ENCODE measurements at regions of chr5 and their contacts with region 1.

Region 1: DNA sequence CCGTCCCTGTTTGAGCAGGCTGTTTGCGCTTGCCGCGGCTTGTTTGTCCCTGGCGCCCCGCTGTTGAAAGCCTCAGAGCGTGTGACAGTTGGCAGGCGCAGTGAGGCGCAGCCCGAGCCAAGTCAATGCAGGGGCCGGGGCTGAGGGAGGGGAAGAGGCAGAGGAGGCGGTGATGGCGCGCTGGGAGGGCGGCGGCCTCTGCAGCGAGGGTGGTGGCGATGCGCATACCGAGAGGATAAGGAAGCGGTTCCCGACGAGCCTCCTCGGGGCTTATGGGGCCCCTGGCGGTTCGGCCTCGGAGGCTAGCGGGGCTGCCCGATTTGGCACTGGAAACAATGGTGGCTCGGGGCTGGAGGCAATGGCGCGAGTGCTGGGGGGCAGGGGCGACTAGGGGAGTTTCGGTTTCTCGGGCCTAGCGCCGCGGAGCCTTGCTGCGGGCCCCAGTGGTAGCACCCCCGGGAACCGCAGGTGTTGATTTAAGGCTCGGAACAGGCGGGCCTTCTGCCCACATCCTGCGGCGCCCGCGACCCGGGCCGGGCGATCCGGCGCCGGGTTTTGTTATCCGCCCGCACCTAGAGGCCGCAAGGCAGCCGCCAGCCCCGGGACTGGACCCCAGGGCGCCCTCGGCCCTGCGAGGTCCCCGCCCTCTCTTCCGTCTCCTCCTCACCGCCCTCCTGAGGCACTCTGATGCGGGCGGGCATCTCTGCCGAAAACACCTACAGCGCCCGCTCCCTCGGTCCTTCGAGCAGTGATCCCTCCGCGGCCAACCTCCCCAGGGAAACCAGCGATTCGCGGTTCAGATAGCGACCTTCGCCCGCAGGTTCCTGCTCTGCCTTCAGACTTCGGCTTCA is 947 bp upstream of the LNPEP start:
- DNase-seq: peak; percentile 92 to 98 (median 97)
- ATAC-seq: peak; percentile 81
- H3K4me3 ChIP-seq: peak overlapping the region; percentile 93
- H3K4me3 Mint-ChIP-seq: peak overlapping the region; percentile 84 to 100 (median 94)
- H3K27ac ChIP-seq: peak overlapping the region; percentile 86
- H3K27ac Mint-ChIP-seq: peak overlapping the region; percentile 95 to 99 (median 97)
- H3K4me1 ChIP-seq: peaks cover 34 to 46% of the 10 kb centered on the region in 2 donors
- H3K4me1 Mint-ChIP-seq: peaks cover 53 to 70% (median 64%) of the 10 kb centered on the region in 7 donors
- H3K27me3 ChIP-seq: no peaks in the 10 kb centered on the region
- H3K27me3 Mint-ChIP-seq: no peaks in the 10 kb centered on the region

Region 2: DNA sequence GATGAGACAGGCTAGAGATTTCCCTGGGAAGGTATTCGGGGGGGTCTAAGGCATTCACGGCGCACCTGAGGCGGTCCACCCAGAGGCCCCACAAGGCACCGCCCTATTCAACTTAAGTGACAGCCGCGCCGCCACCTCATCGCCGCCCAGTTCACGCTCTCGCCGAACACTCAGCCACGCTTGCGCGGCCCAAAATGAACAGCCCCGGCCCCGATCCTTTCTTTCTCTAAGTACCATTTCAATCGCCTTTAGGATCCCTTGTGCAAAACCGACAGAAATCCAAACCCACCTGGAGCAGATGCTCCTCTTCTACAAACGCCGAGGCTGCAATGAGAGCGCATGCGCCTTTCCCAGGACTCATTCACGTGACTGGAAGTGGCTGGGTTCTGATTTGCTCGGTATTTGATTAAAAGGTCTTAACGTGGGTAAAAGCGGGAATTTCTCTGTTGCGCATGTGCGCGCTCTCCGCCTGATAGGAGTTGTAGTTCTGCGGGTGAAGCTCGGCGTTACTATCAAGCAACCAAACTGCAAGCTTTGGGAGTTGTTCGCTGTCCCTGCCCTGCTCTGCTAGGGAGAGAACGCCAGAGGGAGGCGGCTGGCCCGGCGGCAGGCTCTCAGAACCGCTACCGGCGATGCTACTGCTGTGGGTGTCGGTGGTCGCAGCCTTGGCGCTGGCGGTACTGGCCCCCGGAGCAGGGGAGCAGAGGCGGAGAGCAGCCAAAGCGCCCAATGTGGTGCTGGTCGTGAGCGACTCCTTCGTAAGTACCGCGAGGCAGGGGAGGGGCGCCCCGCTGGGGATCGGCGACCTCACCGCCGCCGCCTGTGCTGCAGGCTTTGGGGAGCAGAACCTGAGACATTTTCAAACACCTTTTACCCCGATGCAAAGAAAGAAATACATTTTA is 1380.0 kb before region 1 on chr5 and contains the starts of genes ARSK and SKIC3:
- CTCF ChIA-PET with region 1: no interaction called
- POLR2A ChIA-PET with region 1: no interaction called
- intact Hi-C with region 1: loop called in 1 of 2 experiments (anchors 1 kb)
- DNase-seq: peak; percentile 76 to 98 (median 97)
- ATAC-seq: peak; percentile 93
- H3K4me3 ChIP-seq: peak within 1 kb of the TSS; percentile 71
- H3K4me3 Mint-ChIP-seq: peak within 1 kb of the TSS; percentile 90 to 100 (median 96)
- H3K27ac ChIP-seq: peak within 1 kb of the TSS; percentile 83
- H3K27ac Mint-ChIP-seq: peak within 1 kb of the TSS; percentile 92 to 98 (median 94)
- H3K4me1 ChIP-seq: peaks cover 20 to 27% of the 10 kb centered on the region in 2 donors
- H3K4me1 Mint-ChIP-seq: peaks cover 26 to 66% (median 47%) of the 10 kb centered on the region in 7 donors
- H3K27me3 ChIP-seq: no peaks in the 10 kb centered on the region
- H3K27me3 Mint-ChIP-seq: peaks cover 0 to 2% (median 0%) of the 10 kb centered on the region in 5 donors
- total RNA-seq, gene ARSK: 2.5 to 8.5 (median 4.5) TPM
- total RNA-seq, gene SKIC3: 74.6 to 103 (median 81.0) TPM

Region 3: DNA sequence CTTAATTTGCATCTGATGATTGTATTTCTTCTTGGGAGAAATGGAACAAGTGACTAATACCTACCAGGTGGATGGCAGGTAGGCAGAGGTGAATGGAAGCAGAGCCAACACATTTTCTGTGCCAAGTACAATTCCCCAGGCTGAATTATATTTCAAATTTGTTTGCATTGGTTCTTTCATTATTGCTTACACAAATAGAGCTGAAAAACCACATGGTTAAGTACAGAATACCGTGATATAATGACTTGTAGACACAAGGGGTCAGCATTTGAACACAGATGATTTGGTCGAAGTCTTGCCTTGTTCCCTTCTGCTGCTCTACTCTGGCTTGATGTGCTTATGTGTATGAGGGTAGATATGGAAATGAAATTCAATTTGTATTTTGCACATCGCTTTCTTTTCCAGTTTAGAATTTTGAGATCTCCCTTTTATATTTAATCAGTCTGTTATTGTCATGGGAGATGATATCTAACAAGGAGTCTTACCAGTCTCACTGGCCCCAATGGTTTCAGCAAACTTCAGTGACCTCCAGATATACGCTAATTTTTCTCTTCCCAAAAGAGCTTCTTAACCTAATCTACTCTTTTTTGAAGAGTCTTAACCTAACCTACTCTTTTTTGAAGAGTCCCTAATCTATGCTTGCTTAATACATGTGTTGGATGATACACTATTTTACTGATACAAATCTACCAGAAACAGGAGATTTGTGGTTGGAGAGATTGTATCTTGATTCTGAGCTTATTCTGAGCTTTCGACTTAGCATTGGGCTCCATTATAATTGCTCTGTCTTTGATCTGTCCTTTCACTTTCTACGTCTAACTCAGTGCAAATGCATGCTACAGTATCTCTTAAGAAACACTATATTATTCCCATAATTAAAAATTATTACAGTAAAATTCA is 590.0 kb before region 1 on chr5:
- CTCF ChIA-PET with region 1: no interaction called
- POLR2A ChIA-PET with region 1: no interaction called
- intact Hi-C with region 1: loop called in 1 of 2 experiments (anchors 2 kb)
- DNase-seq: peak in 7 of 9 donors; percentile 33 to 70 (median 59)
- ATAC-seq: peak; percentile 91
- H3K4me3 ChIP-seq: no peak overlapping the region
- H3K4me3 Mint-ChIP-seq: peak overlapping the region; percentile 1 to 72 (median 48)
- H3K27ac ChIP-seq: no peak overlapping the region
- H3K27ac Mint-ChIP-seq: peak overlapping the region in 6 of 9 donors; percentile 3 to 53 (median 10)
- H3K4me1 ChIP-seq: peaks cover 6 to 7% of the 10 kb centered on the region in 2 donors
- H3K4me1 Mint-ChIP-seq: peaks cover 5 to 21% (median 18%) of the 10 kb centered on the region in 7 donors
- H3K27me3 ChIP-seq: no peaks in the 10 kb centered on the region
- H3K27me3 Mint-ChIP-seq: peaks cover 0 to 38% (median 8%) of the 10 kb centered on the region in 5 donors

Region 4: DNA sequence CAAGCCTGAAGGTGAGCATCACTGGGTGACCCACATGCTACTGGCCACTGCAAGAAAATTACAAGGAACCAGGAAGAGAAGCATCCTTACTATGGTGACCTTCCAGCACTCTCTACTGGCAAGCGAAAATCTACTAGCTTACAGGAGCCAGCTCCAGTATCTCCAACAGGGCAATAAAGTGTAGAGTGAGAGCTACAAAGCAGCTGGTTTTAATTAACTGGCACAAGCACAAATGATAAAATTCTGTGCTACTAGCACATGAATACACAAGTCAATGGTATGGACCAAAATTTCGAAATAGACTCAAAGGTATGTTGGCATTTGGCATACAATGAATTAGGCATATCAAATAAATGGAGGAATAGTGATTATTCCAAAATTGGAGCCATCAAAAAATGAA is 386.0 kb before region 1 on chr5:
- CTCF ChIA-PET with region 1: no interaction called
- POLR2A ChIA-PET with region 1: no interaction called
- intact Hi-C with region 1: no loop called
- DNase-seq: no peak
- ATAC-seq: no peak
- H3K4me3 ChIP-seq: no peak overlapping the region
- H3K4me3 Mint-ChIP-seq: no peak overlapping the region
- H3K27ac ChIP-seq: no peak overlapping the region
- H3K27ac Mint-ChIP-seq: no peak overlapping the region
- H3K4me1 ChIP-seq: no peaks in the 10 kb centered on the region
- H3K4me1 Mint-ChIP-seq: peaks cover 0 to 2% (median 0%) of the 10 kb centered on the region in 7 donors
- H3K27me3 ChIP-seq: no peaks in the 10 kb centered on the region
- H3K27me3 Mint-ChIP-seq: peaks cover 0 to 29% (median 6%) of the 10 kb centered on the region in 5 donors

Region 5: GRCh38 chr5:96648023-96648422 is 286.9 kb before region 1 on chr5:
- CTCF ChIA-PET with region 1: no interaction called
- POLR2A ChIA-PET with region 1: no interaction called
- intact Hi-C with region 1: no loop called
- DNase-seq: no peak
- ATAC-seq: no peak
- H3K4me3 ChIP-seq: no peak overlapping the region
- H3K4me3 Mint-ChIP-seq: no peak overlapping the region
- H3K27ac ChIP-seq: no peak overlapping the region
- H3K27ac Mint-ChIP-seq: peak overlapping the region in 1 of 9 donors; percentile 16
- H3K4me1 ChIP-seq: no peaks in the 10 kb centered on the region
- H3K4me1 Mint-ChIP-seq: peaks cover 0 to 3% (median 0%) of the 10 kb centered on the region in 7 donors
- H3K27me3 ChIP-seq: no peaks in the 10 kb centered on the region
- H3K27me3 Mint-ChIP-seq: peaks cover 0 to 47% (median 6%) of the 10 kb centered on the region in 5 donors

Region 6: GRCh38 chr5:96763026-96763425 is 171.9 kb before region 1 on chr5:
- CTCF ChIA-PET with region 1: no interaction called
- POLR2A ChIA-PET with region 1: no interaction called
- intact Hi-C with region 1: no loop called
- DNase-seq: no peak
- ATAC-seq: no peak
- H3K4me3 ChIP-seq: no peak overlapping the region
- H3K4me3 Mint-ChIP-seq: no peak overlapping the region
- H3K27ac ChIP-seq: no peak overlapping the region
- H3K27ac Mint-ChIP-seq: peak overlapping the region in 4 of 9 donors; percentile 17 to 32 (median 26)
- H3K4me1 ChIP-seq: no peaks in the 10 kb centered on the region
- H3K4me1 Mint-ChIP-seq: peaks cover 0 to 18% (median 9%) of the 10 kb centered on the region in 7 donors
- H3K27me3 ChIP-seq: no peaks in the 10 kb centered on the region
- H3K27me3 Mint-ChIP-seq: no peaks in the 10 kb centered on the region

Region 7: GRCh38 chr5:96816411-96816939 is 118.5 kb before region 1 on chr5:
- CTCF ChIA-PET with region 1: no interaction called
- POLR2A ChIA-PET with region 1: interaction called, 6 read pairs
- intact Hi-C with region 1: loop called in 1 of 2 experiments (anchors 2 kb)
- DNase-seq: peak in 8 of 9 donors; percentile 37 to 85 (median 76)
- ATAC-seq: peak; percentile 91
- H3K4me3 ChIP-seq: peak overlapping the region; percentile 64
- H3K4me3 Mint-ChIP-seq: peak overlapping the region; percentile 65 to 93 (median 82)
- H3K27ac ChIP-seq: peak overlapping the region; percentile 70
- H3K27ac Mint-ChIP-seq: peak overlapping the region; percentile 74 to 100 (median 94)
- H3K4me1 ChIP-seq: peaks cover 29 to 59% of the 10 kb centered on the region in 2 donors
- H3K4me1 Mint-ChIP-seq: peaks cover 51 to 95% (median 89%) of the 10 kb centered on the region in 7 donors
- H3K27me3 ChIP-seq: no peaks in the 10 kb centered on the region
- H3K27me3 Mint-ChIP-seq: no peaks in the 10 kb centered on the region

Region 8: DNA sequence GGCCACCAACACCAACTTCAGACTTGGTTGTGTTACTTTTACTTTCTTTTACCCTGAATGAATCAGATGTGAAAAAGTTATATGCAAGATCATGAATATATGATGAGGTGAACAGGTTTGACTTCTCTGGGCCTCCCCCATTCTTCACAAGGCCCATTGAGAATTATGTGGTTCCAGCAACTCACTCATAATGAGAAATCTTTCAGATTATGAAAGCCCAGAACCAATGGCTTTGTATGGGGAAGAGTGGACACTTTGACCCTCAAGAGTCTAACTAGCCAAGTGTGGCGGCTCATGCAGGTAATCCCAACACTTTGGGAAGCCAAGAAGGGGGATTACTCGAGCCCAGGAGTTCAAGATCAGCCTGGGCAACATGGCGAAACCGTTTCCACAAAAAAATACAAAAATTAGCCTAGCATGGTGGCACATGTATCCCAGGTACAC is 15.2 kb before region 1 on chr5:
- CTCF ChIA-PET with region 1: interaction called, 5 read pairs
- POLR2A ChIA-PET with region 1: interaction called, 35 read pairs
- intact Hi-C with region 1: loop called (anchors 1 kb)
- DNase-seq: no peak
- ATAC-seq: no peak
- H3K4me3 ChIP-seq: no peak overlapping the region
- H3K4me3 Mint-ChIP-seq: no peak overlapping the region
- H3K27ac ChIP-seq: no peak overlapping the region
- H3K27ac Mint-ChIP-seq: peak overlapping the region in 5 of 9 donors; percentile 54 to 87 (median 77)
- H3K4me1 ChIP-seq: peaks cover 0 to 16% of the 10 kb centered on the region in 2 donors
- H3K4me1 Mint-ChIP-seq: peaks cover 14 to 56% (median 49%) of the 10 kb centered on the region in 7 donors
- H3K27me3 ChIP-seq: no peaks in the 10 kb centered on the region
- H3K27me3 Mint-ChIP-seq: no peaks in the 10 kb centered on the region

Region 9: DNA sequence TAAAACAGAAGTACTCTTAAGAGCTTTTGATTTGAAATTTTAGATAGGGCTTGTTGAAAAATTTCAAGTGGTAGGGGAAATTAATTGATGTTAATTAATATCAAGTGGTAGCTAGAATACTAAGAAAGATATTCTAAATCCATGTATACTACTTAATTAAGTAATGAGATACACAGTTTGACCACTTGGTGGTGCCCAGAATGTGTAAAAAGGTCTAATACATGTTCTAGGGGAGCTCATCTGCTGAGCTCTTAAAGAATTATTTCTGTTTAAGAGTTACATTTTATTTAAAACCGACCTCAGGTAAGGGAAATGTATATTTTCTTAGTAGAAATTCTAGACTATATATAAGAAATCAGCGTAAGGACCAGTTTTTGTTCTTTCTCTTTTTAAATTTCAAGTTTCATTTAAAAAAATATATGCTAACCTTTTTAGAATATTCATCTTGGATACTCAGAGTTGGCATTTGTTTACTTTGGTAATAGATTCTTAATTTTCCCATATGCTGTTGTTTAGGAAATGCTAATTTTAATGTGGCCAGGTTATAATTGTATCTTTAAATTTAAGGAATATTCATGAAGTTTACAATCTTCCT is 62.4 kb after region 1 on chr5:
- CTCF ChIA-PET with region 1: no interaction called
- POLR2A ChIA-PET with region 1: interaction called, 4 read pairs
- intact Hi-C with region 1: loop called (anchors 2 kb)
- DNase-seq: peak in 5 of 9 donors; percentile 13 to 49 (median 21)
- ATAC-seq: peak; percentile 81
- H3K4me3 ChIP-seq: no peak overlapping the region
- H3K4me3 Mint-ChIP-seq: no peak overlapping the region
- H3K27ac ChIP-seq: no peak overlapping the region
- H3K27ac Mint-ChIP-seq: peak overlapping the region in 5 of 9 donors; percentile 13 to 75 (median 53)
- H3K4me1 ChIP-seq: no peaks in the 10 kb centered on the region
- H3K4me1 Mint-ChIP-seq: peaks cover 12 to 49% (median 33%) of the 10 kb centered on the region in 7 donors
- H3K27me3 ChIP-seq: no peaks in the 10 kb centered on the region
- H3K27me3 Mint-ChIP-seq: no peaks in the 10 kb centered on the region

Region 10: DNA sequence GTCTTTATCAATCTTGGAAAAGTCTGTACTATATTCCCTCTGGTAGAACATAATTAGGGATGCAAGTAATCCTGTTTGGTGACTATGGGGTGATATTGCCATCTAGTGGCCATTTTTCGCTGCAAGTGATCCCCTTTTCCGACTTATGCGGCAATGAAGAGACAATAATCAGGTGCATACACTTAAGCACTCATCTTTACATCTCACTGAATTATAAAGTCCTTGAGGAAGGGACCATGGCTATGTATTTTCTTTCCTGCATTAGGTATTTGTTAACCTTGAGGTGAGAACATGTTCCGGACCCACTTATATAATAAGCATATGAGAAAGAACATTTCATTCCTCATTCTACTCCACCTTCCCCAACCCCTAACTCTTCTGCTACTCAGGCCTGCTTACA is 227.1 kb after region 1 on chr5:
- CTCF ChIA-PET with region 1: interaction called, 3 read pairs
- POLR2A ChIA-PET with region 1: no interaction called
- intact Hi-C with region 1: loop called (anchors 1 to 2 kb)
- DNase-seq: peak in 7 of 9 donors; percentile 23 to 64 (median 45)
- ATAC-seq: peak; percentile 62
- H3K4me3 ChIP-seq: no peak overlapping the region
- H3K4me3 Mint-ChIP-seq: no peak overlapping the region
- H3K27ac ChIP-seq: no peak overlapping the region
- H3K27ac Mint-ChIP-seq: no peak overlapping the region
- H3K4me1 ChIP-seq: no peaks in the 10 kb centered on the region
- H3K4me1 Mint-ChIP-seq: peaks cover 0 to 17% (median 11%) of the 10 kb centered on the region in 7 donors
- H3K27me3 ChIP-seq: no peaks in the 10 kb centered on the region
- H3K27me3 Mint-ChIP-seq: peaks cover 0 to 4% (median 0%) of the 10 kb centered on the region in 5 donors